GM10248 (cell line): ENCODE measurements at regions of chr3 and their contacts with region 1.

Region 1: GRCh38 chr3:42804106-42804830 is at the start of gene HIGD1A:
- DNase-seq: peak; percentile 98
- CTCF ChIP-seq: no peak

Region 2: DNA sequence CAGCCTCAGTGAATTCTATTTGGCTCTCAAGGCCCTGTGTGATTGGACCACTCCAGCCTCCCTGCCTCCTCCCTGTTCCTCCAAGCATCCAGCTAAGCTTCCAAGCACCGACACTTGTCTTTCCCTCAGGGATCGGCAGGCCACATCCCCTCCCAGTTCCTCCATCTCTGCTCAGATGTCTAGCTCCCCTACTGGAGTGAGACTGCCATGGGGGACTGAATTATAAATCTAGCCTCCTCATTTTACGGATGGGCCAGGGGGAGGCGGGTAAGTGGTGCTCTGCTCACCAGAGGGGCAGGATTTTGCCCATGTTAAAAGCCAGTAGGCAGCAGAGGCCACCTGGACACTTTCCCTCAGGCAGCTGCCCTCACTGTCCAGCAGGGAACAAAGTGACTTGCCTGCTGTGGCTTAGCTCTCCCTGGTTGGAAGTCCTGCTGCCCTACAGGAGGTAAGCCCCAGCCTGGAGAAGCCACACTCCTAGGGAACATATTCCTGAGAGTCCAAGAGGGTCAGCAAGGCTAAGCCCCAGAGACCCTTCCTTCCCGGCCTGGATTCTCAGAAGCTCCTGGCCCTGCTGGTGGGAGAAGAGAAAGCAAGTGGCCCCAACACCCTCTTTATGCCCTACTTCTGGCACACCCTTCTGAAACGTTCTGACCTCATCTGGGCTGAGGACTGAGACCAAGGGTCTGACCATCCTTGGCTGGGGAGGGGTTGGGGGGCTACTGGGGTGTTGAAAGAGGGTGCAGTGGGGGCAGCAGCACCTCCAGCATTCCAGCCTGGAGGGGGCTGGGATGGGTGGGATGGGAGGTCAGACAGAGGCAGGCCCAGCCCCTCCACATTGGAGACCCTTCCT is 92.6 kb before region 1 on chr3:
- CTCF ChIA-PET with region 1: no interaction called
- POLR2A ChIA-PET with region 1: no interaction called
- DNase-seq: no peak
- CTCF ChIP-seq: no peak

Region 3: DNA sequence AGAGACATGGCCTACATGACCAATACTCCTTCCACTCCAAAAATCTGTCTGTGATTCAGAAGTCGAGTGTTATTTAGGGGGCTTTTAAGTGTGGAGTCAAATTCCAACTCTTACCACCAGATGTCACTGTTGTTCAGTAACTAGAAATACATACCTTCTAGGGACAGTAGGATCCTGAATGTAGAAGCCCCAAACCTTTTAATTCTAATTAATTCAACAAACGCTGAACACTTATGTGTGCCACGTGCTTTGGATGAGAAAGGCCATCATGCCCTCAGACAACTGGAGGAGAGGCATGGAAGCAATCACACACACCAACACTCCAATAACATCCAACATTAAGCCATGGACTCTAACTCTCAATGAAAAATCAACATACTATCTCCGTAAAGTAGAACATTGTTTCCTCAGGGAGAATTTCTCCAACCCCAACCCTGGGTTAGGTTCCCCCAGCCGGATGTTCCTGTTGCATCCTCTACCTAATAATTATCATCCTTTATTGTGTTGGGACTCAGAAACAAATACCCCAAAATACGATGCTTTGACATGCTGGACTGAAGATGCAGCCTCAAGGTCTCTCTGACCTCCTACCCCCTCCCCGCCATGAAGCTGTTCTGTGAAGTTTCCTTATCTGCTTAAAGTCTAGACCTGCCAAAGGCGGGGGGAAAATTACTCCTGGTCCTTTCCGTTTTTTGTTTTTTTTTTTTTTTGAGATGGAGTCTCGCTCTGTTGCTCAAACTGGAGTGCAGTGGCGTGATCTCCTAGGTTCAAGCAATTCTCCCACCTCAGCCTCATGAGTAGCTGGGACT is 23.2 kb before region 1 on chr3:
- CTCF ChIA-PET with region 1: interaction called, 11 read pairs
- POLR2A ChIA-PET with region 1: no interaction called
- DNase-seq: peak; percentile 60
- CTCF ChIP-seq: peak; percentile 58